PC-3 (cell line): ENCODE measurements at regions of chr1 and their contacts with region 1.

Region 1: DNA sequence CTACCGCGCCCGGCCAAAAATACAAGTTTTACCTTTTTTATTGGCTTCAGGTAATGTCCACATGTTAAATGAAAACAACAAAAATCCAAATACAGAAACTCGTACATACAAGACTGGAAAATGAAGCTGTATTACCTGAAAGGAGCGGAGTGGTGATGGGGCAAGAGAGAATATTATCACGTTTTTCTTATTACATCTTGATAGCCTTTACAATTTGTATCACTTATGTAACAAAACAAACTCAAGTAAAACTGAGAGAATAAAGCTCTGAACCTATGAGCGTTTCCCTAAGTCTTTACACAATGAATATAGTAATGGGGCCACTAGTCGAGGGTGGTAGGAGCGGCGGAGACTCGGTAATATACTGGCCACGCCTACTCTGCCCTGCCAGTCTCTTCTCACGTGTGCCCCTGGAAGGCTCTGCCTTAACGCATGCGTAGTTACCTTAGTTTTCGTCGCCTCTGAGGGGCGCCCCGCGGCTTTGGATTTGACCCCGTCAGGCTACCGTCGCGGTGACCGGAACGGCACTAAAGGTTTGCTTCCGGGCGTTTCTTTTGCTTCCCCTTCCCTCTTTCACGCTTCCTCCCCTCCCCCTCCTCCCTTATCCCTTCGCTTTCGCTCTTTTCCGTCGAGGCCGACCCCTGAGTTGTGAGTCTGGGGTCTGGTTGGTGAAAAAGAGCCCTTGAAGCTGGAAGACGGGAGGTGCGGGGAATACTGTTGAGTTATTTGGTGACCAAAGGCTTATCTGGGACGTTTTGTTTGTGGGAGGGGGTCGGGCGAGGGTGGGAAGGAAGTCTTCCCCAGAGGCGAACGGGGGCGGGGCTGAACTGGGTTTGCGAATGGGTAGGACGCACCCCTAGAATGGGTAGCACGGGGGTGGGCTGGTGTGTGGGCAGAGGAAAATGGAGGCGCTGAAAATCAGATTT is at the start of gene SETDB1:
- DNase-seq: peak; percentile 99
- ATAC-seq: peak; percentile 90
- H3K4me3 ChIP-seq: peak within 1 kb of the TSS; percentile 81
- H3K27ac ChIP-seq: peak within 1 kb of the TSS; percentile 71
- H3K4me1 ChIP-seq: peaks cover 15% of the 10 kb centered on the region
- H3K27me3 ChIP-seq: no peaks in the 10 kb centered on the region
- CTCF ChIP-seq: no peak
- total RNA-seq, gene SETDB1: 35.4 and 42.4 TPM in 2 replicates

Region 2: DNA sequence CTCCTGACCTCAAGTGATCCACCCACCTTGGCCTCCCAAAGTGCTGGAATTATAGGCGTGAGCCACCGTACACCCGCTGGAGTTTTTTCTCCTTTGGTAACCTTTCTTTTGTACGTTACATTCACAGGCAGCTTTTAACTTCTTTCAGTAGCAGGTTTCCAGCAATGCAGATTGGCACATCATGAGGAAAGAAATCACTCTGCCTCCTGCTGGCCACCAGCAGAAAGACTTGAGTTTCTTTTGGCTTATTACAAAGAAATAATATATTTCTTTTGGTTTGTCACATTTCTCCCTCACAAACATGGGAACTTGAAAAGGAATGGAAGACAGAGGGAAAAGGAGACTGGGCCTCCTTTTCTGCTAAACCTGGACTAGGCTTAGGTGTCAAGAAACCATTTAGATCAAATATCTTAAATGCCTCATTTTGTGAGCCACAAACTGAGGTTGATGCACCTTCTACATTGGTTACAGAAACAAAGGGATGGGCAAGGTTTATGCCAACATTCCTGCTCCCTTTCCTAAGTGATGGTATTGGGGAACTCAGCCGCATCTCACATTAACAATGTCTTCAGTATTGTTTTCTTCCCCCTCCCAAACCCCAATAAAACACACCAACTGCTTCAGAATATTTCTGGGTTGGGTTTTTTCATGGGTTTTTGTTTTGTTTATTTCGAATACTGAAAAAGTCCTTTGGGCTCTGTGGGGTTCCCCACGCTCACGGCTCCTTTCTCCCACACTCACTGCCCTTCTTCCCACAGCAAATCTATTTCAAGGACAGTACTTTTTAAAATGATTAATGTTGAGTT is 304.4 kb before region 1 on chr1:
- CTCF ChIA-PET with region 1: no interaction called
- POLR2A ChIA-PET with region 1: no interaction called
- intact Hi-C with region 1: loop called (anchors 5 kb)
- DNase-seq: peak; percentile 58
- ATAC-seq: no peak
- H3K4me3 ChIP-seq: no peak overlapping the region
- H3K27ac ChIP-seq: peak overlapping the region; percentile 93
- H3K4me1 ChIP-seq: peaks cover 53% of the 10 kb centered on the region
- H3K27me3 ChIP-seq: no peaks in the 10 kb centered on the region
- CTCF ChIP-seq: peak; percentile 82

Region 3: DNA sequence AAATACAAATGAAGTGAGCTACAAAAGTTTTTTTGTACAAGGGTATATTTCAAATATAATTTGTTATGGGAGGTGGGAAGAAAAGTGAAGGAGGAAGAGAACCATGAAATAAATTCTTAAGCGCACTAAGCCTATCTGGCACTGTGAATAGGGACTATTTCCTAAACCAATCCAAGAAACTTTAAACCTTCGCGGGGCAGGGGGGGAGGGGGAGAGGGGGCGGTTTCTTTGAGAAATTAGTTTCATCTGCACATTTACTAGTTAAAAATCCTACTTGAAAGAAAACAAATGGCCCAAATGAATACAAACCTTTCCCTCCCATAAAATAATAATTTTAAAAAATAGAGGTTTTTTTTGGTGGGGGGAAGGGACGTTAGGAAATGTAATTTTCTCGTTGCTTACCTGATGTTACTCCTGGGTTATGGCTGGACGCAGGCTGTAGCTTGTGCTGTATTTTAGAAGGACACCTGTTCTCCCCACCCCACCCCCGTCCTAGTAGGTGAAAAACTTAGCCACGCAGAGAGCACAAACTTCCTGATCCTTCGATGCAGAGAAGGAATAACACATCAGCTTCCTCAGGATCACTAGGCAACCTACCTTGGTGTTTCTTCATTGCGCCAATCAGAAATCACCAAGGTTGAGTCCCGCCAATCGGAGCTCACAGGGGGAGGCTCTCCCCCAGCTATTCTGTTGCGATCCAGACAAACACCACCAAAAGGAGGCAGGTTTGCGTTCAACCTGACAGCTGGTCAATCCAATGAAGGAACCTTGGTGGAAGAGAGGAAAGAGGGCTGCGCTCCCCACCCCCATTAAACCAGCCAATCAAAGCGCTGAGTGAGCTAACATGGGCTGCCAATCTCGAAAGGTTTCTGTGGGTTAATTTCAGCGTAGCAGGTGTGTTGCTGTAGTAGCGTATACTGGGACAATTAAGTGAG is 229.2 kb before region 1 on chr1 and contains the start of gene GOLPH3L:
- CTCF ChIA-PET with region 1: no interaction called
- POLR2A ChIA-PET with region 1: no interaction called
- intact Hi-C with region 1: loop called (anchors 2 kb)
- DNase-seq: peak; percentile 99
- ATAC-seq: peak; percentile 96
- H3K4me3 ChIP-seq: peak within 1 kb of the TSS; percentile 78
- H3K27ac ChIP-seq: 0 out of 2 replicates have a peak within 1 kb of the TSS, but pooled peaks have one; percentile 19
- H3K4me1 ChIP-seq: peaks cover 28% of the 10 kb centered on the region
- H3K27me3 ChIP-seq: no peaks in the 10 kb centered on the region
- CTCF ChIP-seq: no peak
- total RNA-seq, gene GOLPH3L: 9.6 and 15.6 TPM in 2 replicates

Region 4: GRCh38 chr1:150876119-150876454 is 50.0 kb before region 1 on chr1:
- CTCF ChIA-PET with region 1: no interaction called
- POLR2A ChIA-PET with region 1: no interaction called
- intact Hi-C with region 1: loop called (anchors 1 kb)
- DNase-seq: peak; percentile 52
- ATAC-seq: peak; percentile 54
- H3K4me3 ChIP-seq: peak overlapping the region; percentile 74
- H3K27ac ChIP-seq: peak overlapping the region; percentile 21
- H3K4me1 ChIP-seq: peaks cover 20% of the 10 kb centered on the region
- H3K27me3 ChIP-seq: no peaks in the 10 kb centered on the region
- CTCF ChIP-seq: no peak

Region 5: DNA sequence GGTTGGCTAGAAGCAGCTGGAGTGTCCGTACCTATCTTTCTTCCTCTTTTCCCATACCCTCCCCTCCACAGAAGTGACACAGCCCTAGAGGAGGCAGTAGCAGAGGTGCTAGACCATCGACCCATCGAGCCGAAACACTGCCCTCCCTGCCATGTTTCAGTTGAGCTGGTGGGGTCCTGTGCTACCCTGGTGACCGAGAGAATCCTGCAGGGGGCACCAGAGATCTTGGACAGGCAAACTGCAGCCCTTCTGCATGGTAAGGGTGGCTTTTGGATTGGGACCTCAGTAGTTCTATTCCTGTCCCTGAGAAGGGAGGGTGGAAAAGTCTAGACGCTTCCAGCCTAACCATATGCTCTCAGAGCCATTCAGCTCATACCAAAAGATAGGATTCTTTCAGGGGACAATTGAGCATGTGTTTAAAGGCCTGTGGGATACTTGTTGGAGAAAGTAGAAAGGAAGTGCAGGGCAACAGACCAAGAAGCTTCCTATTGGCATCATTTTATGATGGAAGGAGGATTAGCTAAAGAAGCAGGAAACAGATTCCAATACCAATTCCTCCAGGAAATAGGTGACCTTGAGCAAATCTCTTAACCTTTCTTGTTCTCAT is 98.6 kb after region 1 on chr1:
- CTCF ChIA-PET with region 1: no interaction called
- POLR2A ChIA-PET with region 1: no interaction called
- intact Hi-C with region 1: no loop called
- DNase-seq: peak; percentile 75
- ATAC-seq: peak; percentile 91
- H3K4me3 ChIP-seq: no peak overlapping the region
- H3K27ac ChIP-seq: no peak overlapping the region
- H3K4me1 ChIP-seq: no peaks in the 10 kb centered on the region
- H3K27me3 ChIP-seq: no peaks in the 10 kb centered on the region
- CTCF ChIP-seq: peak; percentile 95